HEK293 (cell line): ENCODE measurements at regions of chr6 and their contacts with region 1.

Region 1: GRCh38 chr6:35139908-35140655 is 1.1 kb downstream of the TCP11 start:
- H3K4me3 ChIP-seq: no peak overlapping the region
- H3K27ac ChIP-seq: no peak overlapping the region
- H3K4me1 ChIP-seq: peaks cover 2% of the 10 kb centered on the region; the same call in 1 of the 2 replicates
- CTCF ChIP-seq: peak; percentile 70

Region 2: DNA sequence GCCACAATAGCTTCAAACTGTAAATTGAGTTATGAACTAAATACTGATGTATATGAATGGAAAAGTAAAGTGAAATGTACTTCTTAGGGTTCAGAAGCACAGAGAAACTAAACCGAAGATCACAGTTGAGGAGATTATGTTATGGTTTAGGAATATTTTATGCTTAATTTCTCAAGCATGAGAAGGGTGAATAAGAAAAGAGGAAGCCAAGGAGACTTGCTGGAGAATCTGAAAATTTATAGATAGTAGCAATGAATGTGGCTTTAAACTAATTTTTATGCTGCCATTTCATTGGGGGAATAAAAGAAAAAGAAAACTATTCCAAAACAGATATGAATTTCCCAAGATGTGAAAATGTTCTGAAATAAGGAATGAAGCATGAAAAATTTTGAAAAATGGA is 245.4 kb before region 1 on chr6:
- CTCF ChIA-PET with region 1: interaction called, 10 read pairs
- POLR2A ChIA-PET with region 1: no interaction called
- H3K4me3 ChIP-seq: no peak overlapping the region
- H3K27ac ChIP-seq: no peak overlapping the region
- H3K4me1 ChIP-seq: peaks cover 2% of the 10 kb centered on the region; the same call in 1 of the 2 replicates
- CTCF ChIP-seq: no peak

Region 3: GRCh38 chr6:34979218-34979617 is 160.9 kb before region 1 on chr6:
- CTCF ChIA-PET with region 1: interaction called, 165 read pairs
- POLR2A ChIA-PET with region 1: no interaction called
- H3K4me3 ChIP-seq: no peak overlapping the region
- H3K27ac ChIP-seq: no peak overlapping the region
- H3K4me1 ChIP-seq: no peaks in the 10 kb centered on the region
- CTCF ChIP-seq: no peak

Region 4: DNA sequence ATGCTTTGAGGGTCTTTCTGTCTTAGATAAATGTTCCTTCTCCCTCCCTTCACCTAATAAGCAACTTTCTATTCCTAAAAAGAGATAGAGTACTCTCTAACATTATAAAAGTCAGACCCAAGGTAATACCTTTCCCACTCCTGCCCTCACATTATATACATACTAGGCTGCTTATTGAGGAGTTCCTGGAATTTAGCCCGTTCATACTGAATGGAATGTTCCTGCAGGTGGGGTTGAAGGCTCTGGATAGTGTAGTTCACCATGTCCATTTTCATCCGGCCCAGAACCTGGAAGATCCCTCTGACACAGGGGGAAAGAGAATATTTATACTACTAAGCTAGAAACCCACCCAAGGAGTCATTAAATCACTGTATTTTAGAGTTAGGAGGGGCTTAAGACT is 19.3 kb before region 1 on chr6:
- CTCF ChIA-PET with region 1: interaction called, 16 read pairs
- POLR2A ChIA-PET with region 1: no interaction called
- H3K4me3 ChIP-seq: no peak overlapping the region
- H3K27ac ChIP-seq: no peak overlapping the region
- H3K4me1 ChIP-seq: no peaks in the 10 kb centered on the region
- CTCF ChIP-seq: no peak

Region 5: DNA sequence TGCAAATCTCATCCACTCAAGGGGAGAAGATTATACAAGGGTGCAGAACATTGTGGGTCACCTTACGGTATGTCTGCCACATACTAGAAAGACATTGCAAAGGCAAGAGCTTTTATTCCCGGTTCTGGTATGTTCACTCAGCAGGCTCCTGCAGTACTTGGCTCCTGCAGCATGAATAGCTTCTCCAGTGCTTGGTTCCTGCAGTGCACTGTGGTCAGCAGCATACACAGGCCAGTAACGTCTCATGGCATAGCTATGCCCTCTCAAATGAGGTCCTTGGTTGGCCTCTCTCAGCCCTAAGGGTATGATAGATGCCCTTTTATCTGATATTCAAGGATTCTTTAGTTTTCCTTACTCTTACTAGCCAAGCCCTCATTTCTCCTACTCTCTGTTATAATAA is 11.6 kb before region 1 on chr6:
- CTCF ChIA-PET with region 1: interaction called, 25 read pairs
- POLR2A ChIA-PET with region 1: no interaction called
- H3K4me3 ChIP-seq: no peak overlapping the region
- H3K27ac ChIP-seq: no peak overlapping the region
- H3K4me1 ChIP-seq: no peaks in the 10 kb centered on the region
- CTCF ChIP-seq: no peak

Region 6: DNA sequence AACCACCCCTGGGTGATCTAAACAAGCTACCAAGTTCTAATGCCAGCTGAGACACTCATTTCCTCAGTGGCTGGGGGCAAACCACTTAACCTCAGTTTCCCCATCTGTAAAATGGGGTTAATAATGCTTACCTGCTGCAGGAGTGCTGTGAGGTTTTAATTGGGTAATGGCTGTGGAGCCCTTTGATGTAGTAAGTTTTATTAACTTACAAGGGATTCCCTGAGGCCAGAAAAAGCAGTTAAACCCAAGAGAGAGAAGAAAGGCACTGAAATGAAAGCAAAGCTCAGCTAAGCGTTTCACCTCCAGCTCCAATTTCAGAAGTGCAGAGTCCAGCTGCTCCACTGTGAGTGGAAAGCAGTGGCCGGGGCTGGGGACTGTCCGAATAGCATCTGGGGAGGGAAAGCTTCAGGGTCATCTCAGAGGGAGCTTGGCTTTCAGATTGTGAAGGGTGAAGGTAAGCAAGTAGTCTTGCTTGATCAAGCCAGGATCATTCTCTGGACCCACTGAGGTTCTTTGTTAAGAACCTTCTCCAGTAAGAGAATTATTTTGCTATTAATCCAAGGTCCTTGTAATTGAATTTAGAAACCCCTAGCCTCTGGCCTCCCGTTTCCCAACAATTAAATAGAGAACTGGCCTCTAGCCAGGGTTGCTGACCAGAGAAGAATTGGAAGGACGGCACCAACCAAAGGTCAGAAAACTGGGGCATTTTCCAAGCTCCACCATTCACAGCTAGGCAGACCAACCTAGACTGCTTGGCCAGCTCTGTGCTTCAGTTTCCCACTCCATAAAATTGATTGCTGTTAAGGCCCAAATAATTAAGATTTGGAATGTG is 21.9 kb after region 1 on chr6:
- CTCF ChIA-PET with region 1: interaction called, 10 read pairs
- POLR2A ChIA-PET with region 1: no interaction called
- H3K4me3 ChIP-seq: no peak overlapping the region
- H3K27ac ChIP-seq: no peak overlapping the region
- H3K4me1 ChIP-seq: no peaks in the 10 kb centered on the region; the same call in 1 of the 2 replicates
- CTCF ChIP-seq: no peak

Region 7: GRCh38 chr6:35259194-35259947 is 119.3 kb after region 1 on chr6 and contains the start of gene ZNF76:
- CTCF ChIA-PET with region 1: no interaction called
- POLR2A ChIA-PET with region 1: no interaction called
- H3K4me3 ChIP-seq: peak within 1 kb of the TSS; percentile 76
- H3K27ac ChIP-seq: peak within 1 kb of the TSS; percentile 85
- H3K4me1 ChIP-seq: peaks cover 3% of the 10 kb centered on the region; the same call in 1 of the 2 replicates
- CTCF ChIP-seq: no peak